ENCODE measurements at regions of chr22 and their contacts with region 1.

Region 1: GRCh38 chr22:38069372-38070249 is 12.4 kb downstream of the PICK1 start:
- DNase-seq: peak in 1 of 2 experiments; percentile 45
- ATAC-seq: peak; percentile 58 to 83; a peak in 4 of 6 replicates
- H3K4me3 ChIP-seq: no peak overlapping the region
- H3K27ac ChIP-seq: no peak overlapping the region
- H3K4me1 ChIP-seq: no peaks in the 10 kb centered on the region
- CTCF ChIP-seq: peak; percentile 49
- EP300 ChIP-seq: no peak
- POLR2A ChIP-seq: no peak
- RAD21 ChIP-seq: peak; percentile 66 to 67

Region 2: GRCh38 chr22:38030311-38031133 is 39.1 kb before region 1 on chr22:
- CTCF ChIA-PET with region 1: no interaction called
- POLR2A ChIA-PET with region 1: no interaction called
- DNase-seq: no peak
- ATAC-seq: no peak
- H3K4me3 ChIP-seq: no peak overlapping the region
- H3K27ac ChIP-seq: no peak overlapping the region
- H3K4me1 ChIP-seq: peaks cover 32% of the 10 kb centered on the region
- CTCF ChIP-seq: no peak
- EP300 ChIP-seq: no peak
- POLR2A ChIP-seq: no peak
- RAD21 ChIP-seq: no peak

Region 3: GRCh38 chr22:38056969-38057891 is 12.4 kb before region 1 on chr22 and contains the start of gene PICK1:
- CTCF ChIA-PET with region 1: interaction called, 23 read pairs
- POLR2A ChIA-PET with region 1: no interaction called
- DNase-seq: peak; percentile 88 to 89
- ATAC-seq: peak; percentile 89 to 95
- H3K4me3 ChIP-seq: peak within 1 kb of the TSS; percentile 87
- H3K27ac ChIP-seq: peak within 1 kb of the TSS; percentile 84 to 89
- H3K4me1 ChIP-seq: 0 out of 3 replicates have a peak, but pooled peaks cover 7% of the 10 kb centered on the region
- CTCF ChIP-seq: no peak
- EP300 ChIP-seq: no peak
- POLR2A ChIP-seq: peak; percentile 34
- RAD21 ChIP-seq: no peak
- polyA plus RNA-seq, gene PICK1: 12.9 and 17.8 TPM in 2 replicates

Region 4: DNA sequence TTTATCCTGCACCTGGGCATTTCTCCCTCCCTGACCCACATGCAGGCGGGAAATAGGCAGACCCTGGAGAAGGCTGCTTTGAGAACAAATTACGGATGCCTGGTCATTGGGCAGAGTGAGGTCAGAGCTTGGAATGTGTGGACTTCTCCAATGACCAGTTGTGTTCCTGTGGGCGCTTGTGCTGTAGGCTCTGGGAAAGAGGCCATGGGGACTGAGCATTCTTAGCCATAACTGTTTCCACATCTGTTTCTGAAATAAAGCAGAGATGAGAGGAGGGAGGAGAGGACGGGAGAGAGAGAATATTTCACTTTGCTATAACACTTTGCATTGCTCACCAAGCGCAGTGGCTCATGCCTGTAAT is 214.4 kb after region 1 on chr22:
- CTCF ChIA-PET with region 1: interaction called, 13 read pairs
- POLR2A ChIA-PET with region 1: no interaction called
- DNase-seq: no peak
- ATAC-seq: peak; percentile 38 to 40; a peak in 5 of 6 replicates
- H3K4me3 ChIP-seq: no peak overlapping the region
- H3K27ac ChIP-seq: peak overlapping the region; percentile 69 to 85
- H3K4me1 ChIP-seq: peaks cover 31% of the 10 kb centered on the region
- CTCF ChIP-seq: no peak
- EP300 ChIP-seq: no peak
- POLR2A ChIP-seq: no peak
- RAD21 ChIP-seq: no peak

Region 5: DNA sequence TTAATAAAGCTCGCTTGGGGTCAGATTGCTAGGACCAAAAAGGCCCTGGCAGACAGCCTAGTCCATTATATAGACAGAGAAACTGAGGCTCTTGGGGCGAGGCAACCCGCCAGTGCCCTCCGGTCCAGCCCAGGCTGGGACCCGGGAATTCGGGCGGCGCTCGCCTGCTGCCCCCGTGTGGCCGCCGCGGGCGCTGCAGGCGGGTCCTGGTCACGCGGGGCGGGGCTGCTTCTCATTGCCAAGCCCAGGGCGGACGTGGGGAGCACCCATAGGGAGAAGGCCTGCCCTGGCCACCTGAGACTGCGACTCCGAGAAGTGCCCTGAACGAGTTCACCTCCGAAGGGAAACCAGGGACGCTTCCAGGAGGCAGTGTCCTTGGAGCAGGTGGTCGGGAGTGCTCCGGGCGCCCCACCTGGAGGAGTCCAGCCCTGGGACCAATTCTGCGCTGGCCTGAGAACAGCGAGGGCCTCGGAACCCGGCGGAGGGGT is 283.6 kb after region 1 on chr22:
- CTCF ChIA-PET with region 1: interaction called, 17 read pairs
- POLR2A ChIA-PET with region 1: no interaction called
- DNase-seq: peak; percentile 52 to 56
- ATAC-seq: peak; percentile 64 to 86
- H3K4me3 ChIP-seq: no peak overlapping the region
- H3K27ac ChIP-seq: no peak overlapping the region
- H3K4me1 ChIP-seq: no peaks in the 10 kb centered on the region
- CTCF ChIP-seq: peak; percentile 79
- EP300 ChIP-seq: no peak
- POLR2A ChIP-seq: no peak
- RAD21 ChIP-seq: peak; percentile 75 to 89